HCT116 (cell line): ENCODE measurements at regions of chr11 and their contacts with region 1.

Region 1: GRCh38 chr11:76680518-76681425 is 10.2 kb upstream of the LRRC32 start:
- DNase-seq: peak; percentile 41
- ATAC-seq: peak; percentile 97
- H3K4me3 ChIP-seq: no peak overlapping the region
- H3K27ac ChIP-seq: no peak overlapping the region
- H3K4me1 ChIP-seq: peaks cover 0 to 3% of the 10 kb centered on the region in 2 experiments; a peak in 1 of 4 replicates
- H3K27me3 ChIP-seq: no peaks in the 10 kb centered on the region
- CTCF ChIP-seq: peak; percentile 80 to 87 (median 84)
- POLR2A ChIP-seq: no peak
- RAD21 ChIP-seq: peak; percentile 94

Region 2: DNA sequence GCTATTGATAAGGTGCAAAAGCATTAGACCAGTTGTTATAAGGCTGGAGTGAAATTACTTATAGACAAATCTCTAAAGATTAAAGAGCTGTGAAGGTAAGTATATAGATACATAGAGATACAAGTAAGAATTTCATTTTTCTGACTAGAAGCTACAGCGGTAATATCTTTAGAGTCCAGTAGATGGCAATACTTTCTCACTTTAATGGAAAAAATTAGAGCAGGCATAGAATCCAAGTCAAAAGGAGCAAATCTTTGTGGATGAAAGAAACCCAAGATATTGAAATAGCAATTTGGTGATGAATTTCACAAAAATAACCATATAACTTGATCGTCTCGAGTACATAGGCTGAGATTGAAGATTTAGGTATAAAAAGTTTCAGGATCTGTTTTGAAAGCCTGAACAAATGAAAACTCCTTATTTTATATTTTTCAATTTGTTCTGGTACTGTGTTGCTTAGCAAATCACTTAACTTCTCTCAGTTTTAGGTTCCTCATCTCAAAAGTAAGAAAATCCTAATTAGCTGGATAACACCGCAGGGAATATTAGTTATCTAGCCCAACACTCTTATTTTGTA is 783.8 kb before region 1 on chr11:
- CTCF ChIA-PET with region 1: no interaction called
- POLR2A ChIA-PET with region 1: no interaction called
- RAD21 ChIA-PET with region 1: no interaction called
- intact Hi-C with region 1: loop called (anchors 2 kb)
- DNase-seq: peak; percentile 12
- ATAC-seq: peak; percentile 52; the same call in 1 of the 2 replicates
- H3K4me3 ChIP-seq: no peak overlapping the region
- H3K27ac ChIP-seq: no peak overlapping the region
- H3K4me1 ChIP-seq: no peaks in the 10 kb centered on the region
- H3K27me3 ChIP-seq: no peaks in the 10 kb centered on the region
- CTCF ChIP-seq: peak; percentile 32 to 71 (median 69); a peak in 5 of 6 replicates
- POLR2A ChIP-seq: no peak
- RAD21 ChIP-seq: peak; percentile 82

Region 3: GRCh38 chr11:76207642-76208401 is 472.9 kb before region 1 on chr11:
- CTCF ChIA-PET with region 1: interaction called, 7 read pairs
- POLR2A ChIA-PET with region 1: no interaction called
- RAD21 ChIA-PET with region 1: no interaction called
- intact Hi-C with region 1: loop called (anchors 2 kb)
- DNase-seq: peak; percentile 51
- ATAC-seq: peak; percentile 79
- H3K4me3 ChIP-seq: peak overlapping the region; percentile 12 to 41
- H3K27ac ChIP-seq: no peak overlapping the region
- H3K4me1 ChIP-seq: peaks cover 8 to 42% of the 10 kb centered on the region in 2 experiments
- H3K27me3 ChIP-seq: peaks cover 13% of the 10 kb centered on the region; the same call in 1 of the 2 replicates
- CTCF ChIP-seq: peak; percentile 84 to 95 (median 91)
- POLR2A ChIP-seq: no peak
- RAD21 ChIP-seq: peak; percentile 95

Region 4: DNA sequence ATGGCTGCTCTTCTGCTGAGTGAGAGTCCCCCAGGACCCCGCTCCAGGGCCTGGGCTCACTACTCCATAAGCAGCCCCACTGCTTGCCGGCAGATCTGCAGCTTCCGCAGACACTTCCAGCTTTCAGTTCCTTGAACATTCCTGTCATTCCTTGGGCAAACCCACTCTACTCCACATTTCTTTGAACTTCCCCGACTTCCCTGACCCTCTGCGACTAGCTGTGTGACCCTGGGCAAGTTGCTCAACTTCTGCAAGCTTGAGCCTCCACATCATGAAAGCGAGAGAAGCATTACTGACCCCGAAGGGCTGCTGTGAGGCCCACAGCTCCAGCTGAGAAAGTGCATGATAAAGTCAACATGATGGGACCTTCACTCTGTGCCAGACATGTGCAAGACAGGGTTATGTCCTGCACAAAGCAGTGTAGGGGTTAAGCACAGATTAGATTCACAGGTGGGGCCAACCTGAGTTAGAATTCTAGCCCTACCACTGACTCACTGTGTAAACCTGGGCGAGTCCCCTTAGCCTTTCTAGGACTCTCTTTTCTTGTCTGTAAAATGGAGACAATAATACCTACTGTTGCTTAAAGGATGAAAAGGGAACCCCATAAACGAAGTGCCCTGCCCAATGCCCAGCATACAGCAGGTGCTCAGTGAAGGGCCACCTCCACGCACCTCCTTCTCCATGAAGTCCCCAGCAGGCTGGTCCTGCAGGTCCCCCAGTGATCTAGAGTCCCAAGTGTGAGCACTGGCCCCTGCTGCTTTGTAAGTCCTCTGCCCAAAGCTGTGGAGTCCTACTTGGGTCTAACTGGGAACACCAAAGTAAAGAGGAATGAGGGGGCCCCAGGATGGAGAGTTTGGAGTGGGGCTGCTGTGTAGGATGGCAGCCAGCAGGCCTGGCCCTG is 351.4 kb before region 1 on chr11:
- CTCF ChIA-PET with region 1: no interaction called
- POLR2A ChIA-PET with region 1: no interaction called
- RAD21 ChIA-PET with region 1: no interaction called
- intact Hi-C with region 1: loop called (anchors 10 kb)
- DNase-seq: peak; percentile 3
- ATAC-seq: peak; percentile 70
- H3K4me3 ChIP-seq: no peak overlapping the region
- H3K27ac ChIP-seq: no peak overlapping the region
- H3K4me1 ChIP-seq: peaks cover 8 to 15% of the 10 kb centered on the region in 2 experiments
- H3K27me3 ChIP-seq: no peaks in the 10 kb centered on the region
- CTCF ChIP-seq: no peak
- POLR2A ChIP-seq: no peak
- RAD21 ChIP-seq: no peak

Region 5: GRCh38 chr11:76560219-76560618 is 120.6 kb before region 1 on chr11:
- CTCF ChIA-PET with region 1: no interaction called
- POLR2A ChIA-PET with region 1: no interaction called
- RAD21 ChIA-PET with region 1: no interaction called
- intact Hi-C with region 1: no loop called
- DNase-seq: peak; percentile 40
- ATAC-seq: peak; percentile 73
- H3K4me3 ChIP-seq: no peak overlapping the region
- H3K27ac ChIP-seq: no peak overlapping the region
- H3K4me1 ChIP-seq: peaks cover 9 to 16% of the 10 kb centered on the region in 2 experiments
- H3K27me3 ChIP-seq: no peaks in the 10 kb centered on the region
- CTCF ChIP-seq: no peak
- POLR2A ChIP-seq: no peak
- RAD21 ChIP-seq: no peak

Region 6: DNA sequence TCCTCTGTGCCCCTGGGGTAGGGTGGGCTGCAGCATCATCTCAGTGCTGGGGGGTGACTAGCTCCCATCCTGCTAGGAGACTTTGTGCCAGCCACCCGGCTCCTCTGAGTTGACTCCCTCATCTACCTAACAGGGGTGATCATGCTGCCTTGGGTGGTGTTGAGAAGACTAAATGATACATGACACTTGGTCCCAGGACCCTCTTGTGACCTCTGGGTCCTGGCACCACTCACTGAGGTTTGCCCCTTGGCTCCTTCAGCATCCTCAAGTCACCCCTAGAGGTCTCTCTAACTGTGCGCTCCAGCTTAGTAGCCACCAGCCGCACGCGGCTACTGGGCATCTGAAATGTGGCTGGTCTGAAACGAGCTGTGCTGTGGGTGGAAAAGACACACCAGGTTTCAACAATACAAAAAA is 82.3 kb before region 1 on chr11:
- CTCF ChIA-PET with region 1: interaction called, 7 read pairs
- POLR2A ChIA-PET with region 1: interaction called, 3 read pairs
- RAD21 ChIA-PET with region 1: interaction called in 1 of 2 experiments, 4 read pairs
- intact Hi-C with region 1: loop called (anchors 5 kb)
- DNase-seq: peak; percentile 7
- ATAC-seq: peak; percentile 90
- H3K4me3 ChIP-seq: no peak overlapping the region
- H3K27ac ChIP-seq: no peak overlapping the region
- H3K4me1 ChIP-seq: no peaks in the 10 kb centered on the region
- H3K27me3 ChIP-seq: no peaks in the 10 kb centered on the region
- CTCF ChIP-seq: peak; percentile 45 to 63 (median 49); a peak in 5 of 6 replicates
- POLR2A ChIP-seq: no peak
- RAD21 ChIP-seq: peak; percentile 75

Region 7: DNA sequence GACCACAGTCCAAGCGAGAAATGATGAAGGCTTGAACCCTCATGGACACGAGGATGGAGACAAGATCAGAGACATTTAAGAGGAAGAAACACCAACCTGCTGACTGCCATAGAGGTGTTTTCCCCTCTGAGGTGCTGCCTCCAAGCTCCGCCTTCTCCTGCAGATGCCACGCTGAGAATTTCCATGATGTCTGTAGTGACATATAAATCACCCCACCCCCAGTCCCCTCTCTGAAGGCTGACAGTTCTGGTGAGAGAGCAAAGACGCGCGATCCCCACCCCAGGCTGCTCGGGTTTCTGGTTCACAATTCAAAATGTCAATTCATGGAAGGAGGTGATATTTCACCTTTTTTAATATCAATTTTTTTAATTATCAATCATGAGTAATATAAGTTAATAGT is 38.4 kb before region 1 on chr11:
- CTCF ChIA-PET with region 1: no interaction called
- POLR2A ChIA-PET with region 1: no interaction called
- RAD21 ChIA-PET with region 1: no interaction called
- intact Hi-C with region 1: no loop called
- DNase-seq: no peak
- ATAC-seq: no peak
- H3K4me3 ChIP-seq: no peak overlapping the region
- H3K27ac ChIP-seq: no peak overlapping the region
- H3K4me1 ChIP-seq: no peaks in the 10 kb centered on the region
- H3K27me3 ChIP-seq: no peaks in the 10 kb centered on the region
- CTCF ChIP-seq: no peak
- POLR2A ChIP-seq: no peak
- RAD21 ChIP-seq: no peak